ENCODE measurements at regions of chr6 and their contacts with region 1.

Region 1: GRCh38 chr6:30717042-30717844 is at the start of gene MDC1:
- DNase-seq: peak; percentile 100
- H3K4me3 Mint-ChIP-seq: peak within 1 kb of the TSS; percentile 98
- H3K27ac Mint-ChIP-seq: peak within 1 kb of the TSS; percentile 99
- H3K4me1 Mint-ChIP-seq: peaks cover 45% of the 10 kb centered on the region
- H3K27me3 Mint-ChIP-seq: no peaks in the 10 kb centered on the region
- total RNA-seq, gene MDC1: 84.1 to 84.8 TPM

Region 2: DNA sequence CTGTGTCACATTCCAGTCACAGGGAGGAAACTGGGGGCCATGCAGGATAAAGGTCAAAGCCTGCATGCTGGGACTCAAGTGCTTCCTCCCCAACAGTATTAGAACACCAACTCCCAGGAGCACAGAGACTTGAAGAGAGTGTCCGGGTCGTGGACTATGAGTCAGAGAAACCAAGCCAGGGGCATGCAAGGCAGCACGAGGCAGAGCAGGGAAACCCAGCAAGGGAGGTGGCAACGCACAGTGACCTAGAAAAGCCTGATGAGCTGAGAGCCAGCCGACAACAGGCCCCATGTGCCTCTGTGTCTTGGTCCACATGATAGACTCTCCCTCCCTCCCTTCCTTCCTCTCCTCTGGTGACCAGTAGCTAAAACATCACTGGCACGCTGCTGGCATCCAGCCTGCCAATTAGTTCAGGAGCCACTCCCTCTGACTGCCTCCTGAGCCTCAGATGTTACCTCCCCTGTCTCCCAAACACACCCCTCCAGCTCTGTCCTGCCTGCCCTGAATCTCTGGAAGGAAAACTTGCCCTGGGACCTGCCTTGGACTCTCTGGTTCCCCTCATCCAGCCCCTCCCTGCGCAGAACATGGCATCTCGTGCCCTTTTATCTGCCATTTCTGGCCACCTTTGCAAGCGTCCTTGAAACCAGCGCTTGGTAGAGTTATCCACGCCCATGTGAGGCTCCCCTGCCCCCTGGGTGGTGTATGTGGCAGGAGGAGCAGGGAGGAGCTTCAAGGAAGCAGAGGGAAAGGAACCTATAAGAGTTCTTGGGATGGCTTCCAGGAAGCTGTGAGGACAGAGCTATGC is 625.5 kb before region 1 on chr6:
- CTCF ChIA-PET with region 1: no interaction called
- intact Hi-C with region 1: no loop called
- DNase-seq: no peak
- H3K4me3 Mint-ChIP-seq: no peak overlapping the region
- H3K27ac Mint-ChIP-seq: no peak overlapping the region
- H3K4me1 Mint-ChIP-seq: no peaks in the 10 kb centered on the region
- H3K27me3 Mint-ChIP-seq: peaks cover 9% of the 10 kb centered on the region

Region 3: GRCh38 chr6:30212865-30213666 is 504.2 kb before region 1 on chr6 and contains the start of gene TRIM26:
- CTCF ChIA-PET with region 1: no interaction called
- intact Hi-C with region 1: loop called (anchors 5 kb)
- DNase-seq: peak; percentile 99
- H3K4me3 Mint-ChIP-seq: peak within 1 kb of the TSS; percentile 94
- H3K27ac Mint-ChIP-seq: peak within 1 kb of the TSS; percentile 99
- H3K4me1 Mint-ChIP-seq: peaks cover 41% of the 10 kb centered on the region
- H3K27me3 Mint-ChIP-seq: no peaks in the 10 kb centered on the region
- total RNA-seq, gene TRIM26: 36.8 to 38.7 TPM

Region 4: DNA sequence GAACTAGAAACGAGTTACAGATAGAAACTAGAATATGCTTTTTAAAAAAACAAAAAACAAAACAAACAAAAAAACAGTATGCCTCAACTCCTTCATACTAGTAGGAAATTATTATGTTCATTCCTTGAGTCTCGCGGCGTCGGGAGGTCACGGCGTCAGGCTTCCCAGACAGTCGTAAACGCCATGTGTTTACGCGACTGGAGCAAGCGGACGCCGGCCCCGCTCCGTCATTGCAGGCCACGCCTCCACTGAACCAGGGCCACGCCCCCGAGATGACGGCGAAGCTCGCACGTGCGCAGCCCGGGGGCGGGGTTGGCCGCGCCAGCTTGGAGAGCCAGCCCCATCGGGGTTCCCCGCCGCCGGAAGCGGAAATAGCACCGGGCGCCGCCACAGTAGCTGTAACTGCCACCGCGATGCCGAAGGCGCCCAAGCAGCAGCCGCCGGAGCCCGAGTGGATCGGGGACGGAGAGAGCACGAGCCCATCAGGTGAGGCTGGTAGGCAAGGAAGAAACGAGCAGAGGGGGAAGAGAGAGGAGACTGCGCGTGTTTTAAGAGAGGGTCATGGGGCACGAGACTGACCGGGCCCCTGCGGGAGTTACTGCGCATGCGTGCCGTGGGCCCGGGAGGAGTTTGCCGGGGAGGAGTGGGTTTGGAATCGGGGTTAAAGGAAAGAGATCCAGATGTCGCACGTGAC is 146.0 kb before region 1 on chr6 and contains the start of gene ABCF1:
- CTCF ChIA-PET with region 1: interaction called, 4 read pairs
- intact Hi-C with region 1: loop called (anchors 2 kb)
- DNase-seq: peak; percentile 99
- H3K4me3 Mint-ChIP-seq: peak within 1 kb of the TSS; percentile 98
- H3K27ac Mint-ChIP-seq: peak within 1 kb of the TSS; percentile 95
- H3K4me1 Mint-ChIP-seq: peaks cover 70% of the 10 kb centered on the region
- H3K27me3 Mint-ChIP-seq: no peaks in the 10 kb centered on the region
- total RNA-seq, gene ABCF1: 79.5 to 82.7 TPM

Region 5: GRCh38 chr6:30672445-30673253 is 44.6 kb before region 1 on chr6 and contains the start of gene DHX16:
- CTCF ChIA-PET with region 1: interaction called, 346 read pairs
- intact Hi-C with region 1: no loop called
- DNase-seq: peak; percentile 94
- H3K4me3 Mint-ChIP-seq: peak within 1 kb of the TSS; percentile 80
- H3K27ac Mint-ChIP-seq: peak within 1 kb of the TSS; percentile 80
- H3K4me1 Mint-ChIP-seq: peaks cover 26% of the 10 kb centered on the region
- H3K27me3 Mint-ChIP-seq: no peaks in the 10 kb centered on the region
- total RNA-seq, gene DHX16: 25.7 to 27.7 TPM

Region 6: DNA sequence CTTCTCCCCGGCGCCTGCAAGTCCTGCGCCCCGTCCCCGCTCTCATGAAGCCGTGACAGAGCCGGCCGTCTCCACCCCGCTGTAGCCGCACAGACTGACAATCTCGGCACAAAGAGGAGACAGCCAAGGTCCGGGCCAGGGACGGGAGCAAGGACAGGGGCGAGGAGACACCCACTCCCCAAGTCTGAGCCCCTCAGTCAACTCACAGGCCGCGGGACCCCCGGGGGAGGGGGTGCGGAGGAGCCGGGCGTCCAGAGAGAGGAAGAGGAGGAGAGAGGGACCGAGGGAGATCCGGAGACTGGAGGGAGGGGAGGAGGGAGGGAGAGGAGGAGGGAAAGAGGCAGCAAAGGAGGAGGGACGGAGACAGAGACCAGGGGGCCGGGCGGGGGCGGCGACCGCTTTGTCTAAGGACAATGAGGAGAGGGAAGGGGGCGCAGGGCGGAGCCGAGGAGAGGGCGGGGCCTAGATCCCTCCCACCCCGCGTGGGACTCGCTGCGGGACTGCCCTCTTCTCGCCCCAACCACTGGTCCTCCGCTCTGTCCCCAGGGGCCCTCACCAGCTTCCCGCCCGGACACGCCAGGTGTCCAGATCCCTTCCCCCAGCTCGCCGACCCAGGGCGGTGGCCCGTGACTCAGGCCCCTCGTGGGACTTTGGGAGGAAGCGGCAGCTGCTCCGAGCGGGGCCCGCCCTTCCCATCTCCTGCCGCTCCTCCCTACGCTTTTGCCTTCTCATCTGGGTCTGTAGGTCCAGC is 30.2 kb before region 1 on chr6:
- CTCF ChIA-PET with region 1: interaction called, 346 read pairs
- intact Hi-C with region 1: loop called (anchors 1 kb)
- DNase-seq: peak; percentile 77
- H3K4me3 Mint-ChIP-seq: peak overlapping the region; percentile 96
- H3K27ac Mint-ChIP-seq: peak overlapping the region; percentile 100
- H3K4me1 Mint-ChIP-seq: peaks cover 36% of the 10 kb centered on the region
- H3K27me3 Mint-ChIP-seq: no peaks in the 10 kb centered on the region

Region 7: GRCh38 chr6:30742316-30743098 is 25.3 kb after region 1 on chr6 and contains the start of gene FLOT1:
- CTCF ChIA-PET with region 1: interaction called, 5 read pairs
- intact Hi-C with region 1: loop called (anchors 1 kb)
- DNase-seq: peak; percentile 96
- H3K4me3 Mint-ChIP-seq: peak within 1 kb of the TSS; percentile 94
- H3K27ac Mint-ChIP-seq: peak within 1 kb of the TSS; percentile 96
- H3K4me1 Mint-ChIP-seq: peaks cover 61% of the 10 kb centered on the region
- H3K27me3 Mint-ChIP-seq: no peaks in the 10 kb centered on the region
- total RNA-seq, gene FLOT1: 162 to 173 TPM

Region 8: DNA sequence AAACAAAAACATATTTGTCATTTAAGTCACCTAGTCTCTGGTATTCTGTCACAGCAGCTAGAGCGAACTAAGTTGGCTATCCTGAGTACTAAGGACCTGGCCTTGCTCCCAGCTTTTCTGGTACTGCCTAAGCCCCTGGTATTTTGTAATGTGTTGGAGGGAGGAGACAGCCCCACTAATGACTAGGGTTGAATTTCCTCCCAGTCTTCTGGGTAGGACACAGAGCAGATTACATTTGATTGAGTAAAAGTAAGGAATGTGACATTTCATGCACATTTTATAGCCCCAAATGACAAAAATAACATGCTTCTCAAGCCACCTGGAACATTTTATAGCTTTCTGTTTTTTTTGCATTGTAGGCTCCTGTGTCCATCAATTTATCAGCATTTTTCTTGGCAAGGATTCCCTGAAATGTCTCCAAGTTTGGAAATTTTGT is 119.2 kb after region 1 on chr6:
- CTCF ChIA-PET with region 1: no interaction called
- intact Hi-C with region 1: no loop called
- DNase-seq: no peak
- H3K4me3 Mint-ChIP-seq: no peak overlapping the region
- H3K27ac Mint-ChIP-seq: no peak overlapping the region
- H3K4me1 Mint-ChIP-seq: peaks cover 17% of the 10 kb centered on the region
- H3K27me3 Mint-ChIP-seq: no peaks in the 10 kb centered on the region

Region 9: GRCh38 chr6:31203345-31203979 is 486.2 kb after region 1 on chr6:
- CTCF ChIA-PET with region 1: no interaction called
- intact Hi-C with region 1: loop called (anchors 5 kb)
- DNase-seq: peak; percentile 69
- H3K4me3 Mint-ChIP-seq: peak overlapping the region; percentile 84
- H3K27ac Mint-ChIP-seq: peak overlapping the region; percentile 99
- H3K4me1 Mint-ChIP-seq: peaks cover 61% of the 10 kb centered on the region
- H3K27me3 Mint-ChIP-seq: no peaks in the 10 kb centered on the region

Region 10: DNA sequence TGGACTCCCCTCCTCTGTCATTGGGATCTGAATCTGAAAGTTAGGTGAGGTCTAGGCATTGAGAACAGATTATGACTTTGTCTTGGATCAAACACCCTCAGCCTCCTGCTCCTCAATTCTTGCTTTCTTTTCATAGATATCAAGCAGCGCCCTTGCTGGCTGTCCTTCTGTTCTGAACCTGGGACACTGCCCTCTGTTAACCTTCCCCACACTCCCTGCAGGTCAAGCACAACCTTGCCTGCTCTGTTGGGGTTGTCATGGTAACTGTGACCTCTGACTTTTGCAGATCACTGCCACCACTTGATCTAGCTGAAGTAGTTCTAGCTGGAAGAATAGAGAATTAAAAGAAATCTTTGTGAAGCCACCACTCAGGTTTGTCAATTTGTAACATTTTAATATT is 669.7 kb after region 1 on chr6:
- CTCF ChIA-PET with region 1: no interaction called
- intact Hi-C with region 1: no loop called
- DNase-seq: no peak
- H3K4me3 Mint-ChIP-seq: no peak overlapping the region
- H3K27ac Mint-ChIP-seq: no peak overlapping the region
- H3K4me1 Mint-ChIP-seq: no peaks in the 10 kb centered on the region
- H3K27me3 Mint-ChIP-seq: no peaks in the 10 kb centered on the region

Measured in activated naive CD4-positive, alpha-beta T cell treated with anti-CD3 and anti-CD28 coated beads for 36 hours (primary cell).